Caco-2 (cell line): ENCODE measurements at regions of chr21 and their contacts with region 1.

Region 1: GRCh38 chr21:28745131-28746016 is 247.3 kb downstream of the LTN1 start:
- DNase-seq: peak; percentile 74
- H3K4me3 ChIP-seq: peak overlapping the region; percentile 24
- H3K4me3 Mint-ChIP-seq: no peak overlapping the region
- H3K27ac Mint-ChIP-seq: no peak overlapping the region
- H3K4me1 ChIP-seq: no peaks in the 10 kb centered on the region
- H3K4me1 Mint-ChIP-seq: no peaks in the 10 kb centered on the region
- H3K27me3 ChIP-seq: no peaks in the 10 kb centered on the region
- H3K27me3 Mint-ChIP-seq: no peaks in the 10 kb centered on the region
- CTCF ChIP-seq: peak; percentile 76 to 88

Region 2: DNA sequence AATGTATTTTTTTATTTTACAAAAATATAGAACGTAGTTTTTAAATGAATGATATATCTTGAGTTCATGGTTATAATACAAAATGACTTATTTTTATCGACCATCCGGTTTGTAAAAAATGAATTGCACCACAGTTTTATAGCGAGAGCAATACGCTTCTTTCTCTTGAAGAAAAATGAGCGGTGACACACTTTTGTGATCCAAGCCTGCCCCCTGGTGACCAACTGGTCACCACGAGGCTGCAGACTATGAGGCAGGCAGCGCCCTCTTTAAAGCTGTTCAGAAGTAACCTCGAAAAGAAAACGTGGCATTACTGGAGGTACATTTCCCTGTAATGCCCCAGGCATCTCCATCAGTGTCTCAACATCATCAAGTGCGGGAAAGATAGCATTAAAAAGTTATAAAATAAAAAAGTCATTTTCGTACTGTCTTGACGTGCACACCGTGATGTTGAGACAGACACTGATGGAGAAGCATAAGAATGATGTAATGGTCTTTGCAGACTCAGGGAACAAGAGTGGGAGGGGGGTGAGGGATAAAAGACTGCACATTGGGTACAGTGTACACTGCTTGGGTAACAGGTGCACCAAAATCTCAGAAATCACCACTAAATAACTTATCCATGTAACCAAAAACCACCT is 1044.3 kb before region 1 on chr21:
- CTCF ChIA-PET with region 1: interaction called, 7 read pairs
- POLR2A ChIA-PET with region 1: no interaction called
- intact Hi-C with region 1: loop called (anchors 10 kb)
- DNase-seq: peak; percentile 72 to 79
- H3K4me3 ChIP-seq: no peak overlapping the region
- H3K4me3 Mint-ChIP-seq: no peak overlapping the region
- H3K27ac Mint-ChIP-seq: no peak overlapping the region
- H3K4me1 ChIP-seq: no peaks in the 10 kb centered on the region
- H3K4me1 Mint-ChIP-seq: no peaks in the 10 kb centered on the region
- H3K27me3 ChIP-seq: no peaks in the 10 kb centered on the region
- H3K27me3 Mint-ChIP-seq: peaks cover 7% of the 10 kb centered on the region
- CTCF ChIP-seq: peak; percentile 86 to 90

Region 3: GRCh38 chr21:28099001-28099705 is 646.2 kb before region 1 on chr21:
- CTCF ChIA-PET with region 1: no interaction called
- POLR2A ChIA-PET with region 1: no interaction called
- intact Hi-C with region 1: loop called (anchors 10 kb)
- DNase-seq: no peak
- H3K4me3 ChIP-seq: no peak overlapping the region
- H3K4me3 Mint-ChIP-seq: no peak overlapping the region
- H3K27ac Mint-ChIP-seq: no peak overlapping the region
- H3K4me1 ChIP-seq: no peaks in the 10 kb centered on the region
- H3K4me1 Mint-ChIP-seq: peaks cover 4% of the 10 kb centered on the region
- H3K27me3 ChIP-seq: no peaks in the 10 kb centered on the region
- H3K27me3 Mint-ChIP-seq: no peaks in the 10 kb centered on the region
- CTCF ChIP-seq: no peak

Region 4: DNA sequence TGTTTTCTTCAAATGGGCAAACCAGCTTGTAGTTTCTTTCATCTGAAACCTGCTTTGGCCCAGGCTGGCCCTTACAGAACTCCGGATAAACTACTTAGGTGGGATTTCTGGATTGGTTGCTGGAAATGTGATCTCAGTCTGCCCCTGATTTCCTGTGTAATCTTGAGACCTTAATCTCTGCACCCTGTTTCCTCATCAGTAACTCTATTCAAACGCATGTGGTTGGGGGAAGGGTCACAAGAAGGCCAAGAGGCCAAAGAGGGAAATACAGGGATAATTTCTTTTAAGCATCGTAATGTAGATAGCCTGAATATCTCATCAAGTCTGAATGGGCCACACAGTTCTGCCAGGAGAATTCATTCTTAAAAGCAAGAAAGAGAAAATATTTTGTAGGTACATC is 236.3 kb before region 1 on chr21:
- CTCF ChIA-PET with region 1: interaction called, 10 read pairs
- POLR2A ChIA-PET with region 1: no interaction called
- intact Hi-C with region 1: no loop called
- DNase-seq: no peak
- H3K4me3 ChIP-seq: no peak overlapping the region
- H3K4me3 Mint-ChIP-seq: no peak overlapping the region
- H3K27ac Mint-ChIP-seq: no peak overlapping the region
- H3K4me1 ChIP-seq: no peaks in the 10 kb centered on the region
- H3K4me1 Mint-ChIP-seq: no peaks in the 10 kb centered on the region
- H3K27me3 ChIP-seq: no peaks in the 10 kb centered on the region
- H3K27me3 Mint-ChIP-seq: no peaks in the 10 kb centered on the region
- CTCF ChIP-seq: no peak

Region 5: DNA sequence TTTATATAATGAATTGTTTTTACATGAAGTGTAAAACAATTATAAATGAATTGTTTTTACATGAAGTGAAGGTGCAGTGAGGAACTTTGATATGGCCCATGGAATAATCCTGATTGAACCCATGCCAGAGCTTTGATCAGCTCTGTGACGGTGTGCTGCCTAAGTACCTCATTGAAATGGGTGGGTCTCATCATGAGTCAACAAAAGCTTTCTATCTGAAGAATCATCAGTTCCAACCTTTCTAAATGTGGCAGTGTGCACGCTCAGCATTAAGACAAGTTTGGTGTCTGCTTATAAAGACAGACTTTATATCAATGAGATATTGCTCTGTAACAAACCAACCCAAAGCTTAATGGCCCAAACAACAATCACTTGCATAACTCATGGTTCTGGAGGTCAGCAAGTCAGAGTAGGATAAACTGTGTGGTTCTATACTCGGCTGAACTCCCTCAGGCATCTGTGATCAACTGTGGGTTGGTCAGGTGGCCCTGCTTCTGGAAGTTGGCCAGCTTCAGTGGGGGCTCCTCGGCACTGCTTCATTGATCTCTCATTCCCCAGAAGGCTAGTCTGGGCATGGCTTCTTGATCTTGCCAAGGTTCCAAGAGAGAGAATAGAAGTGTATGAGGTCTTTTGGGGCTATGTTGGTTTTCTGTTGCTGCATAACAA is 10.7 kb before region 1 on chr21:
- CTCF ChIA-PET with region 1: interaction called, 12 read pairs
- POLR2A ChIA-PET with region 1: no interaction called
- intact Hi-C with region 1: no loop called
- DNase-seq: no peak
- H3K4me3 ChIP-seq: no peak overlapping the region
- H3K4me3 Mint-ChIP-seq: no peak overlapping the region
- H3K27ac Mint-ChIP-seq: no peak overlapping the region
- H3K4me1 ChIP-seq: no peaks in the 10 kb centered on the region
- H3K4me1 Mint-ChIP-seq: no peaks in the 10 kb centered on the region
- H3K27me3 ChIP-seq: no peaks in the 10 kb centered on the region
- H3K27me3 Mint-ChIP-seq: no peaks in the 10 kb centered on the region
- CTCF ChIP-seq: no peak

Region 6: GRCh38 chr21:28943631-28944030 is 198.3 kb after region 1 on chr21:
- CTCF ChIA-PET with region 1: interaction called, 6 read pairs
- POLR2A ChIA-PET with region 1: no interaction called
- intact Hi-C with region 1: loop called (anchors 1 kb)
- DNase-seq: no peak
- H3K4me3 ChIP-seq: no peak overlapping the region
- H3K4me3 Mint-ChIP-seq: no peak overlapping the region
- H3K27ac Mint-ChIP-seq: no peak overlapping the region
- H3K4me1 ChIP-seq: no peaks in the 10 kb centered on the region
- H3K4me1 Mint-ChIP-seq: peaks cover 8% of the 10 kb centered on the region
- H3K27me3 ChIP-seq: no peaks in the 10 kb centered on the region
- H3K27me3 Mint-ChIP-seq: no peaks in the 10 kb centered on the region
- CTCF ChIP-seq: no peak